Adrenal gland (tissue), 19 donors: ENCODE measurements at regions of chr12 and their contacts with region 1.

Region 1: DNA sequence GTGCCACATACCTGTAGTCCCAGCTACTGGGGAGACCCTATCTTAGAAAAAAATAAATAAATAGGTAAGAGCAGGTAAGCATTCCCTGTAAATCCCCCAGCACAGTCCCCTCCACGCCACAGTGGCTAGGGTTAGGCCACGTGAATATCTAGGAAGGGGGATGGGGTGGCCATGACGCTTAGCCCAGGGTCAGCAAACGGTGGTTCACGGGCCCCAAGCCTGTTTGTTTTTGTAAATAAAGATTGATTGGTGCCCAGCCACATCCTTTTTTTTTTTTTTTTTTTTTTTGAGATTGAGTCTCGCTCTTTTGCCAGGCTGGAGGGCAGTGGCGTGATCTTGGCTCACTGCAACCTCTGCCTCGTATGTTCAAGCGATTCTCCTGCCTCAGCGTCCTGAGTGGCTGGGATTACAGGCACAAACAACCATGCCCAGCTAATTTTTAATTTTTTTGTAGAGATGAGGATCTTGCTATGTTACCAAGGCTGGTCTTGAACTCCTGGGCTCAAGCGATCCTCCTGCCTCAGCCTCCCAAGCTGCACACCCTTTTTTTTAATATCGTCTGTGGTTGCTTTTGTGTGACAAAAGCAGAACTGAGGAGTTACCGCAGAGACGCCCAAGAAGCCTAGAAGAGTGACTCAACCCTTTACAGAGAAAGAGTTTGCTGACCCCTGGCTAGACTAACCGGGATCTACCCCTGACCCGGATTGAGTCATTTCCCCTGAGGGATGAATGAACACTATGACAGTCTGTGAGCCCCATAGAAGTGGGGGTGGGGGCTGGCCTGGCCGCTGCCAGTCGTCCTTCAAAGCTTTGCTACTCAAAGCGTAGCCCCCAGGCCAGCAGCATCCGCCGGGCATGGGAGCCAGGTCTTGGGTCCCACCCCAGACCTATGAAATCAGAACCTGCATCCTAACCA is 113.7 kb upstream of the NCOR2 start:
- DNase-seq: peak; percentile 36 to 92 (median 63)
- H3K4me3 ChIP-seq: no peak overlapping the region
- H3K27ac ChIP-seq: peak overlapping the region in 3 of 5 donors; percentile 66 to 87 (median 78)
- H3K4me1 ChIP-seq: peaks cover 47 to 82% of the 10 kb centered on the region in 2 donors
- H3K27me3 ChIP-seq: no peaks in the 10 kb centered on the region
- CTCF ChIP-seq: peak in 4 of 6 experiments; percentile 6 to 47 (median 41)
- POLR2A ChIP-seq: no peak

Region 2: GRCh38 chr12:124493809-124494750 is 187.0 kb before region 1 on chr12:
- intact Hi-C with region 1: no loop called
- DNase-seq: no peak
- H3K4me3 ChIP-seq: no peak overlapping the region
- H3K27ac ChIP-seq: no peak overlapping the region
- H3K4me1 ChIP-seq: peaks cover 28 to 45% of the 10 kb centered on the region in 2 donors
- H3K27me3 ChIP-seq: no peaks in the 10 kb centered on the region
- CTCF ChIP-seq: no peak
- POLR2A ChIP-seq: no peak

Region 3: DNA sequence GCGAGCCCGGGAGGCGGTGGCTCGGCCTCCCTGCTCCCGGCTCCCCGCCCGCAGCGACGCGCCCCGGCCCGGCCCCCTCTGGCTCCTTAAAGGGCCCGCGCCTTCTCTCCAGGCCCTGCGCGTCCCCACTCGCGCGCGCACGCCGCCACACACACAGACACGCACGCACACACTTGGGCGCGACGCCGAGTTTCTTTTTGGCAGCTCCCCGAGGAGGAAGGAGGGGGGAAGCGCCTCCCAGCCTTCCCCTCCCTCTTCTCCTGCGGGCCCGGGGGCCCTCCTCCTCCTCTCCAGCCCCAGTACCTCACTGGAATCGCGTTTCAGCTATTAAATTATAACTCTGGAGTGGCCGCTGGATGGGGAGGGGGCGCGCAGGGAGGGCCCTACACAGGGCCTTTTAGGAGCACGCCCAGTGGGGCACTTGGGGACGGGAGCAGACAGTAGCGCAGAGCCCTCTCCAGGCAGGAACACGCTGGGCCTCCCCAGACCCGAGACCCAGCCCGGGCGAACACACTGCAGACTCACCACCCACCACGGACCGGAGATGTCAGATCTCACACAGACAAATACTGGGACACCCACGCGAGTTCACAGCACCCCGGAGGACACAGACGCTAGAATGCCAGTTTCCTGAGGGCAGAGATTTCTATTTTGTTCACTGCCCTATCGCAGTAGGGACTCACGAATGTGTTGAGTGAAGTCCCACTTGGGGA is 113.3 kb before region 1 on chr12:
- intact Hi-C with region 1: loop called (anchors 5 to 10 kb)
- DNase-seq: peak; percentile 93 to 97 (median 96)
- H3K4me3 ChIP-seq: peak overlapping the region in 2 of 4 donors; percentile 6 to 47
- H3K27ac ChIP-seq: peak overlapping the region; percentile 72 to 99 (median 88)
- H3K4me1 ChIP-seq: peaks cover 40 to 48% of the 10 kb centered on the region in 2 donors
- H3K27me3 ChIP-seq: no peaks in the 10 kb centered on the region
- CTCF ChIP-seq: peak in 1 of 6 experiments; percentile 7
- POLR2A ChIP-seq: peak in 1 of 2 donors; percentile 18

Region 4: GRCh38 chr12:124745891-124746570 is 64.9 kb after region 1 on chr12:
- intact Hi-C with region 1: loop called in 1 of 2 experiments (anchors 10 kb)
- DNase-seq: peak; percentile 89 to 98 (median 96)
- H3K4me3 ChIP-seq: no peak overlapping the region
- H3K27ac ChIP-seq: peak overlapping the region; percentile 60 to 91 (median 80)
- H3K4me1 ChIP-seq: peaks cover 14 to 31% of the 10 kb centered on the region in 2 donors
- H3K27me3 ChIP-seq: no peaks in the 10 kb centered on the region
- CTCF ChIP-seq: no peak
- POLR2A ChIP-seq: peak in 1 of 2 donors; percentile 48

Region 5: GRCh38 chr12:124786061-124786964 is 105.2 kb after region 1 on chr12:
- intact Hi-C with region 1: no loop called
- DNase-seq: peak in 6 of 7 donors; percentile 51 to 92 (median 68)
- H3K4me3 ChIP-seq: no peak overlapping the region
- H3K27ac ChIP-seq: peak overlapping the region in 3 of 5 donors; percentile 16 to 88 (median 25)
- H3K4me1 ChIP-seq: peaks cover 11 to 17% of the 10 kb centered on the region in 2 donors
- H3K27me3 ChIP-seq: no peaks in the 10 kb centered on the region
- CTCF ChIP-seq: no peak
- POLR2A ChIP-seq: no peak